Heart left ventricle (tissue), 16 donors: ENCODE measurements at regions of chr19 and their contacts with region 1.

Region 1: GRCh38 chr19:49148784-49149651 is 6.2 kb downstream of the HRC start:
- DNase-seq: peak; percentile 97 to 99 (median 98)
- ATAC-seq: peak; percentile 74 to 86 (median 78)
- H3K4me3 ChIP-seq: peak overlapping the region; percentile 50 to 92 (median 74)
- H3K27ac ChIP-seq: peak overlapping the region; percentile 70 to 100 (median 86)
- H3K4me1 ChIP-seq: peaks cover 0 to 53% (median 39%) of the 10 kb centered on the region in 12 donors
- H3K27me3 ChIP-seq: peaks cover 0 to 21% (median 0%) of the 10 kb centered on the region in 9 donors
- CTCF ChIP-seq: peak in 1 of 12 donors; percentile 2
- POLR2A ChIP-seq: peak; percentile 7 to 85

Region 2: GRCh38 chr19:48872182-48872883 is 276.7 kb before region 1 on chr19 and contains the start of gene PPP1R15A:
- intact Hi-C with region 1: loop called in 1 of 10 experiments (anchors 10 kb)
- DNase-seq: peak; percentile 97 to 99 (median 97)
- ATAC-seq: peak; percentile 62 to 82 (median 72)
- H3K4me3 ChIP-seq: peak within 1 kb of the TSS; percentile 75 to 99 (median 89)
- H3K27ac ChIP-seq: peak within 1 kb of the TSS; percentile 98 to 100 (median 100)
- H3K4me1 ChIP-seq: peaks cover 11 to 60% (median 41%) of the 10 kb centered on the region in 12 donors
- H3K27me3 ChIP-seq: no peaks in the 10 kb centered on the region
- CTCF ChIP-seq: peak in 3 of 12 donors; percentile 7 to 19 (median 10)
- POLR2A ChIP-seq: peak; percentile 93 to 99
- total RNA-seq, gene PPP1R15A: 51.7 to 88.2 (median 62.6) TPM

Region 3: GRCh38 chr19:48993175-48994034 is 155.6 kb before region 1 on chr19 and contains the starts of genes GYS1 and RUVBL2:
- intact Hi-C with region 1: loop called in 1 of 10 experiments (anchors 5 kb)
- DNase-seq: peak; percentile 99 to 100 (median 100)
- ATAC-seq: peak; percentile 91 to 94 (median 94)
- H3K4me3 ChIP-seq: peak within 1 kb of the TSS; percentile 56 to 99 (median 82)
- H3K27ac ChIP-seq: peak within 1 kb of the TSS; percentile 86 to 99 (median 96)
- H3K4me1 ChIP-seq: peaks cover 6 to 51% (median 35%) of the 10 kb centered on the region in 12 donors
- H3K27me3 ChIP-seq: no peaks in the 10 kb centered on the region
- CTCF ChIP-seq: peak; percentile 92 to 100 (median 98)
- POLR2A ChIP-seq: peak; percentile 77 to 98
- total RNA-seq, gene GYS1: 125 to 264 (median 173) TPM
- total RNA-seq, gene RUVBL2: 41.4 to 93.9 (median 50.9) TPM

Region 4: DNA sequence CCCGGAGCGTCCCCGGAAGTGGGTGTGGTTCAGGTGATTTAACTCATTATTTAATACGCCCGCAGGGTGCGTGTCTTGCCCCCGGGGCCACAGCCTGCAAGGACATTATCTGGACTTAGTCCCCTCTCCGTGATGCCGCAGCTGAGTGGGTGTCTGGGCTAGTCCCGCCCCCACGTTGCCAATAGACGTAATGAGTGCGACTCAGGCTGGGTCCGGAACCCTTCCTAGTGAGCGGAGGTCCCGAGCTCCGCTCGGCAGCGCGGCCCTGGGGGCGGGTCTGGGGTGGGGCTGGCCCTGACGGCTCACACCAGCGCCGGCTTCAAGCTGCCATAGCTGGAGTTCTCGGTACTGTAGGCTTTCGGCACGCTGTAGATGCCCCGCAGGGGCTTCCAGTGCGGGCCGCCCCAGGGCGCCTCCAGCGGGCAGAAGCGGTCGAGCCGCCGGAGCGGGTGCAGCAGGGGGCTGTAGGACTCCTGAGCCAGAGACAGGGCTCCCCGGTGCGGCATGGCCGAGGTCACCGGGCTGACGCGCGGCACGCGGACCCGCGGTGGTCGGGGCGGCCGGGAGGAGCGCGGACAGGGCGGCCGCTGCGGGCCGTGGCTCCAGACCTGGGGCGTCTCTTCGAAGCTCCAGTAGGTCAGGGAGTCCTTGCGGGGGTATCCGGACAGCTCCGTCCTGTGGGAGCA is 131.2 kb before region 1 on chr19:
- intact Hi-C with region 1: no loop called
- DNase-seq: peak; percentile 31 to 77 (median 53)
- ATAC-seq: peak in 3 of 4 donors; percentile 51 to 71 (median 69)
- H3K4me3 ChIP-seq: peak overlapping the region; percentile 15 to 63 (median 52)
- H3K27ac ChIP-seq: peak overlapping the region in 1 of 12 donors; percentile 42
- H3K4me1 ChIP-seq: peaks cover 0 to 29% (median 16%) of the 10 kb centered on the region in 12 donors
- H3K27me3 ChIP-seq: peaks cover 0 to 25% (median 0%) of the 10 kb centered on the region in 9 donors
- CTCF ChIP-seq: peak in 9 of 12 donors; percentile 32 to 68 (median 50)
- POLR2A ChIP-seq: no peak

Region 5: DNA sequence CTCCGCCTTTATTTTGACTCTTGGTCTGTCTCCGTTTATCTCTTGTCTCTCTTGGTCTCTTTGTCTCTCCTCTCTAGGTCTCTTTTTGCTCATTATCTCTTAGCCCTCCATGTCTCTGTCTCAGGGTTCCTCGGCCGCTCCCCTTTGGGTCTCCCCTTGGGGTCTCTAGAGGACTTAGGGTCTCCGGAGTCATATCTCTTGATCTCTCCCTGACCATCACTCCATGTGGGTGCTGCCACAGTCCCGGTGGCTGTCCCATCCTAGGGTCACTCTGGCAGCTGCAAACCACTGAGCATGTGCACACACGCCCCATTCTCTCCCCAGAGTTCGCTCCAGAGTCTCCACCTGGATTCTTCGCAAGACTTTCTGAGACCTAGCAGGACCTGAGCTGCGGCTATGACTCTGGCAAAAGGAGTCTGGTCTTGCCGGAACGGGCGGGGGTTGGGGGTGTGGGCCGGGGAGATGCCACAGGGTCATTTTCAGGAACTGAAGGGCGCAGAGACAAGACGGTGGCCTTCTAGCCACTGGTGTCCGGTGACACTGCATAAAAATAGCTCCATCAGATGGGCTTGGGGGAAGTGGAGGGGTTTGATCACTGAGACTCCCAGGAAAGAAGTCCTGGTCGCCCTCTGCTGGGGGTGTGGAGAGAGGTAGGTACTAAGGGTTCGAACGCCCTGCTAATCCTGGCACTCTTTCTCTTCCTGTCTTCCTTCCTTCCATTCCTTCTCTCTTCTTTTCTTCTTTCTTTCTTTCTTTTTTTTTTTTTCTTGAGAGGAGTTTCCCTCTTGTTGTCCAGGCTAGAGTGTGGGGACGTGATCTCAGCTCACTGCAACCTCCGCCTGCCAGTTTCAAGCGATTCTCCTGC is 75.3 kb before region 1 on chr19:
- intact Hi-C with region 1: loop called in 1 of 10 experiments (anchors 1 kb)
- DNase-seq: no peak
- ATAC-seq: peak in 3 of 4 donors; percentile 50 to 77 (median 60)
- H3K4me3 ChIP-seq: no peak overlapping the region
- H3K27ac ChIP-seq: no peak overlapping the region
- H3K4me1 ChIP-seq: peaks cover 0 to 20% (median 1%) of the 10 kb centered on the region in 12 donors
- H3K27me3 ChIP-seq: peaks cover 9 to 59% (median 24%) of the 10 kb centered on the region in 9 donors
- CTCF ChIP-seq: peak in 2 of 12 donors; percentile 9 to 14
- POLR2A ChIP-seq: no peak

Region 6: GRCh38 chr19:49097455-49098288 is 51.3 kb before region 1 on chr19:
- intact Hi-C with region 1: loop called in 9 of 10 experiments (anchors 1 to 5 kb)
- DNase-seq: peak; percentile 54 to 73 (median 62)
- ATAC-seq: peak; percentile 37 to 66 (median 57)
- H3K4me3 ChIP-seq: no peak overlapping the region
- H3K27ac ChIP-seq: no peak overlapping the region
- H3K4me1 ChIP-seq: peaks cover 0 to 32% (median 19%) of the 10 kb centered on the region in 12 donors
- H3K27me3 ChIP-seq: no peaks in the 10 kb centered on the region
- CTCF ChIP-seq: peak; percentile 97 to 100 (median 99)
- POLR2A ChIP-seq: no peak

Region 7: GRCh38 chr19:49118565-49119410 is 30.2 kb before region 1 on chr19 and contains the start of gene C19orf73:
- intact Hi-C with region 1: loop called in 8 of 10 experiments (anchors 2 to 5 kb)
- DNase-seq: peak; percentile 95 to 98 (median 96)
- ATAC-seq: peak; percentile 88 to 94 (median 92)
- H3K4me3 ChIP-seq: peak within 1 kb of the TSS; percentile 36 to 79 (median 65)
- H3K27ac ChIP-seq: peak within 1 kb of the TSS; percentile 93 to 99 (median 98)
- H3K4me1 ChIP-seq: peaks cover 5 to 51% (median 29%) of the 10 kb centered on the region in 12 donors
- H3K27me3 ChIP-seq: peaks cover 0 to 13% (median 0%) of the 10 kb centered on the region in 9 donors
- CTCF ChIP-seq: peak in 7 of 12 donors; percentile 8 to 30 (median 19)
- POLR2A ChIP-seq: peak in 1 of 2 donors; percentile 61
- total RNA-seq, gene C19orf73: 0.69 to 3.1 (median 1.3) TPM

Region 8: DNA sequence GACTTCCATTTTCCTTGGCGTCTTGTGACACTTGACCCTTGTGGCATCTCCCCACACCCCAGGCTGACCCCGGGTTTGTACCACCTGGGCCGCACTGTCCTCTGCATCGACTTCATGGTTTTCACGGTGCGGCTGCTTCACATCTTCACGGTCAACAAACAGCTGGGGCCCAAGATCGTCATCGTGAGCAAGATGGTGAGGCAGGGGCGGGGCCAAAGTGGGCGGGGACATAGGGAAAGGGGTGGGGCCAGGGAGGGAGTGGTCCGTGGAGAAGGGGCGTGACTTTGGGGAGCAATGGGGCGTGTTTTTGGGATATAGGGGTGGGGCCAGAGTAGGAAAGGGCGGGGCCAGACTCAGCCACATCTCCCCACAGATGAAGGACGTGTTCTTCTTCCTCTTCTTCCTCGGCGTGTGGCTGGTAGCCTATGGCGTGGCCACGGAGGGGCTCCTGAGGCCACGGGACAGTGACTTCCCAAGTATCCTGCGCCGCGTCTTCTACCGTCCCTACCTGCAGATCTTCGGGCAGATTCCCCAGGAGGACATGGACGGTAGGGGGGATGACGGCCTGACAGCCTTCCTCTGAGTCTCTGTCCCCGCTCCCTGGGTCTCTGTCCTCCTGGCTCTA is 51.3 kb after region 1 on chr19:
- intact Hi-C with region 1: loop called in 1 of 10 experiments (anchors 5 kb)
- DNase-seq: no peak
- ATAC-seq: peak in 2 of 4 donors; percentile 26 to 44
- H3K4me3 ChIP-seq: no peak overlapping the region
- H3K27ac ChIP-seq: no peak overlapping the region
- H3K4me1 ChIP-seq: peaks cover 0 to 17% (median 6%) of the 10 kb centered on the region in 12 donors
- H3K27me3 ChIP-seq: no peaks in the 10 kb centered on the region
- CTCF ChIP-seq: no peak
- POLR2A ChIP-seq: no peak